ENCODE measurements at regions of chr9 and their contacts with region 1.

Region 1: GRCh38 chr9:27427273-27427645 is 96.8 kb upstream of the IFNK start:
- DNase-seq: no peak
- ATAC-seq: no peak
- H3K4me3 ChIP-seq: no peak overlapping the region
- H3K4me3 Mint-ChIP-seq: no peak overlapping the region
- H3K27ac ChIP-seq: no peak overlapping the region
- H3K27ac Mint-ChIP-seq: no peak overlapping the region
- H3K4me1 ChIP-seq: no peaks in the 10 kb centered on the region
- H3K4me1 Mint-ChIP-seq: peaks cover 7% of the 10 kb centered on the region
- H3K27me3 ChIP-seq: no peaks in the 10 kb centered on the region
- H3K27me3 Mint-ChIP-seq: no peaks in the 10 kb centered on the region
- CTCF ChIP-seq: no peak

Region 2: DNA sequence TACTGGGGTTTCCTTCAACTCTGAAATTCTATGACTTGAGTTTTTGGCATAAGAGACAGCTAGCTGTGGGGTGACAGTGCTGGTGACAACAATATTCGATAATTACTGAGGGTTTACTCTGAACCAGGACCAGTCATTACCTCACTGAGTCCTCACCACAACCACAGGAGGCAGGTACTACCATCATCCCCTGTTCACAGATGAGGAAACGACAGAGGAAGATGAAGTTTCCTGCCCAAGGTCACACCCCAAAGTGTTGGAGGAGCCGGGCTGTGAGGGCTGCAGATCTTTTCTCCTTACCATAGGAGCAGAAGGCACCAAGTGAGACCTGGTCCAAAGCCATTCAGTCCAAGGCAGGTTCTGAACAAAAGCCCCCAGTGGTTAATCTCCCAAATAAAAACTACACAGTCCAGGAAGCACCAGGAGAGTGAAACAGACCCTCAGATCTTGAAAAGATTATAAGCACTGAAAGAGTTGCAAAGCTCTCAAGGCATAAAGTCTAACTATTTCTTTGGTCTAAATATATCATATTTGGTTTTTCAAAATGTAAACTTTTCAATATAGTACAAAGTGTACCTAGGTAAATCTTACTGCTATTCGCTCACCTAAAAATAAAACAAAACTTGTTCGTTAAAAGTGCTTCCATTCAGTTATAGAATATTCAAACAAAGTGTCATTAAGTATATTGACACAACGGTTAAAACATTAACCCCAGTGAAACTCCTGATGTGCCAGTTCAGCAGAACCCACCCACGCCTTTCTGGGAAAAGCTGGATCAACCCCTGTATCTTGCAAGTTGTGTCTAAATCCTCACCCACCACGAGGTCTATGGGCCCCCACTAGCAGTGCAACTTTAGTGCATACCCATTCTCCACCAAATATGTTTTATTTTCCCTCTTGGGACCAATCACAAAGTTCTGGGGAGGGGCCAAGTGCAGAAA is 47.7 kb before region 1 on chr9:
- CTCF ChIA-PET with region 1: no interaction called
- POLR2A ChIA-PET with region 1: no interaction called
- intact Hi-C with region 1: loop called in 1 of 2 experiments (anchors 5 kb)
- DNase-seq: no peak
- ATAC-seq: no peak
- H3K4me3 ChIP-seq: no peak overlapping the region
- H3K4me3 Mint-ChIP-seq: no peak overlapping the region
- H3K27ac ChIP-seq: no peak overlapping the region
- H3K27ac Mint-ChIP-seq: no peak overlapping the region
- H3K4me1 ChIP-seq: peaks cover 5% of the 10 kb centered on the region
- H3K4me1 Mint-ChIP-seq: peaks cover 5% of the 10 kb centered on the region
- H3K27me3 ChIP-seq: no peaks in the 10 kb centered on the region
- H3K27me3 Mint-ChIP-seq: no peaks in the 10 kb centered on the region
- CTCF ChIP-seq: no peak

Region 3: DNA sequence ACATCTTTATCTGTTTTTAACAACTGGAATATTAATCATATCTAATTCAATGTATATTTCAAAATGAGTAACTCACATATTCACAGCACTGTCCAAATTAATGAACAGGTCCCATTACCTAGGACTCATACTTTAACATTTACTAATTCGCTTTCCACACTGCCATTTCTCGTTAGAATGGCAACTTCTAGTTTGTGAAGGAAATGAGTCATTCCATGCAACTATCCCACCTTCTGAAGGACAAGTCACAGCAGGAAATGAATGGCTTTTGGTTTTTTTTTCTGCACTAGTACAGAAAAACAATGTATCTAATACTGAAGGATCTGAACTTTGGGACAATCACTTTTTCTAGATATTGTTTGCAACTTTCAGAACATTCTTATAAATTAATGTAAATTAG is 72.2 kb after region 1 on chr9:
- CTCF ChIA-PET with region 1: no interaction called
- POLR2A ChIA-PET with region 1: no interaction called
- intact Hi-C with region 1: loop called in 1 of 2 experiments (anchors 10 kb)
- DNase-seq: peak in 2 of 14 experiments; percentile 12 to 30
- ATAC-seq: no peak
- H3K4me3 ChIP-seq: no peak overlapping the region
- H3K4me3 Mint-ChIP-seq: no peak overlapping the region
- H3K27ac ChIP-seq: no peak overlapping the region
- H3K27ac Mint-ChIP-seq: no peak overlapping the region
- H3K4me1 ChIP-seq: no peaks in the 10 kb centered on the region
- H3K4me1 Mint-ChIP-seq: no peaks in the 10 kb centered on the region
- H3K27me3 ChIP-seq: no peaks in the 10 kb centered on the region
- H3K27me3 Mint-ChIP-seq: no peaks in the 10 kb centered on the region
- CTCF ChIP-seq: no peak

Region 4: DNA sequence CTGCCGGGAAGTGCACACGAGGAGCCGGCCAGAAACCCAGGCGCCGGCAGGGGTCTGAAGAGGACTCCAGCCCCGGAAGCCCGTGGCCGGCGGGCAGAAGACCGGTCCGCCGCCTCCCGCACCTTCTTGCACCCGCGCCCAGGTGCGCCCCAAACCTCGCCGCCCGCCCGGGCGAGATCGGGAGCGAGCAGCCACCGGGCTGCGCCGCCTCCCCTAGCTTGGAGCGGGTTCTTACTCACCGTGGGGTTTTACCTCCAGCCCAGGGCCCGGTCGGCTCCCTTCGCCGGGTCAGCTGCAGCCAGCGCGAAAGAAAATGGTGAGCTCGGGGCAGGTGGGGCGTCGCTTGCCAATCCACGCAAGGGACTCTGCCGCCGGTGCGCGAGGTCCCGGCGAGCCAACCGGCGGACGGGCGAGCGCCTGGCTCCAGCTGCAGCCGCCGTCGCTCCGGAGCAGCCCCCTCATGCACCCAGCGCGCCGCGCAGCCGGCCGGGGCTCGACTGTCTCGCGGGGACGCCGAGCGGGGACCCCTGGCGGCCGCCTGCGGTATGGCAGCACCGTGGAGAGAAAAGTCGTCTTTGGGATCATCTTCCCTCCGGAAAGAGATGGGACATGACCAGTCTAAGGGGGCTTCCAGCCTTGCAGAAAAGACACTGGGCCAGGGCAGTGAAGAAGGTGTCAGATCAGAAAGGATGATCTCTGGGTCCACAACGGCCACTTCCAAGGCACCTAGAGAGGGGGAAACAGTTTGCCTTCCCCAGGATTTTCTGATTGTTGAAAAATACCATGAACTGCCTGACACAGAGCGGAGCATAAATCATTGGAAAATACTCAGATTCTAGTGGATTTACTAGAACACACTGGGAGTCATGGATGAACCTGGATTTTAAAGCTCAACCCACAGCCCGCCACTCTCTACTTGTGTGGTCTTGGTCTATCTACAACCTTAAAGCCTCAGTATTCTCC is 102.3 kb after region 1 on chr9 and contains the start of gene MOB3B:
- CTCF ChIA-PET with region 1: no interaction called
- POLR2A ChIA-PET with region 1: no interaction called
- intact Hi-C with region 1: no loop called
- DNase-seq: peak; percentile 56 to 84 (median 68)
- ATAC-seq: peak; percentile 85
- H3K4me3 ChIP-seq: peak within 1 kb of the TSS; percentile 64
- H3K4me3 Mint-ChIP-seq: peak within 1 kb of the TSS; percentile 95
- H3K27ac ChIP-seq: no peak within 1 kb of the TSS
- H3K27ac Mint-ChIP-seq: no peak within 1 kb of the TSS
- H3K4me1 ChIP-seq: peaks cover 16% of the 10 kb centered on the region
- H3K4me1 Mint-ChIP-seq: peaks cover 15% of the 10 kb centered on the region
- H3K27me3 ChIP-seq: peaks cover 0 to 7% of the 10 kb centered on the region in 2 experiments
- H3K27me3 Mint-ChIP-seq: peaks cover 3% of the 10 kb centered on the region
- CTCF ChIP-seq: peak; percentile 90
- total RNA-seq, gene MOB3B: 0.25 to 0.30 TPM

Measured in CD4-positive, alpha-beta T cell (primary cell).